Activated T-helper 1 cell treated with anti-CD3 and anti-CD28 coated beads, Interleukin-12 subunit alpha, Interleukin-12 subunit beta, Interleukin-2, Interleukin-4 antibody, amounts not matched to agents 30 ng/mL and 10 ng/mL and 1 ng/mL, durations not matched to agents 14 hours and 24 hours and 36 hours (primary cell): ENCODE measurements at regions of chr12 and their contacts with region 1.

Region 1: DNA sequence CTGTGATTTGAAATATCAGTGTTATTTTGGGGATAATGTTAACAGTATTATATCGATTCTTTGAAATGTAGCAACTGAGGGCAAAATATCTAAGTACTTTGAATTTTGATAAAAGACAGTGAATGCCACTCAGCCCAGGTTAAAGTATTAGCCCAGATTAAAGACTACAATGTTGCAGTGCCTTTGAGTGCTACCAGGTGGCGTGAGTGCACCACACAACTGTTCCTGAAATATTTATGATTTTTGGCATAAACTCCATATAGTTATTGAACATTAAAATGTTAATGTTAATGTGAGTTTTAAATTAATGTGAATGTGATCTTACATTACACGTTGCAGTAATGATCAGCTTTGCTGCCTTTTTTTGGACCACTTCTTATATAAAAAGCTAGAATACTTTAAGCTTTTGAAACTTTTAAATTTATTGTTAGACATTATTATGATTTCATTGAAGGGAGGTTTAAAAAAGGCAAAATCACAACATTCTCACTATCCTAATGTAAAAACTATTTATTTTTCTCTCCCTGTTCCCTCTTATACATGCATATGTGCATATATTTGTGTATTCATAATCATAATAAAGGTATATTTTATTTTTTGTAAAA is 22.5 kb downstream of the MRPS35 start:
- DNase-seq: no peak
- H3K4me3 Mint-ChIP-seq: no peak overlapping the region
- H3K27ac Mint-ChIP-seq: no peak overlapping the region
- H3K4me1 Mint-ChIP-seq: no peaks in the 10 kb centered on the region
- H3K27me3 Mint-ChIP-seq: no peaks in the 10 kb centered on the region

Region 2: GRCh38 chr12:27689558-27690180 is 43.5 kb before region 1 on chr12:
- intact Hi-C with region 1: no loop called
- DNase-seq: no peak
- H3K4me3 Mint-ChIP-seq: no peak overlapping the region
- H3K27ac Mint-ChIP-seq: no peak overlapping the region
- H3K4me1 Mint-ChIP-seq: no peaks in the 10 kb centered on the region
- H3K27me3 Mint-ChIP-seq: no peaks in the 10 kb centered on the region

Region 3: DNA sequence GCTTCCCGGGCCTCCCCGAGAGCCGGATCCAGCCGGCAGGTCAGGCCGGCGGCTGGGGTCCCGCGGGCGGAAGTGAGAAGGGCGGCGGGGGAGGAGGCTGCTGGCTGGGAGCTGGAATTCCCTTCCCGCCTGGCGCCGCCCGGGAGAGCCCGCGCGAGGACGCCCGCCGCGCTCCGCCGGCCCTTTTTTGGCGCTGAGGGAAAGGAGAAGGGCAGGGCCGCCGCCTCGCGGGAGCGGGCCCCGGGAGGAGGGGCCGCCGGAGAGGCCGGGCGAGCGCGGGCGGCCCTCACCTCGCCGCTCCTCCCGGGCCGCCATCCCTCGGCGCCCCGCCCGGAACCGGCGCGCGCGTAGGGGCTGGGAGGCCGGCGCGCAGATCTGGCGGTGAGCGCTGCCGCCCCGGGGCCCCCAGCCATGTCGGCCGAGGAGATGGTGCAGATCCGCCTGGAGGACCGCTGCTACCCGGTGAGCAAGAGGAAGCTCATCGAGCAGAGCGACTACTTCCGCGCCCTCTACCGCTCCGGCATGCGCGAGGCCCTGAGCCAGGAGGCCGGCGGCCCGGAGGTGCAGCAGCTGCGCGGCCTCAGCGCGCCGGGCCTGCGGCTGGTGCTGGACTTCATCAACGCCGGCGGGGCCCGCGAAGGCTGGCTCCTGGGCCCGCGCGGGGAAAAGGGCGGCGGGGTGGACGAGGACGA is 46.9 kb after region 1 on chr12 and contains the starts of genes KLHL42 and MANSC4:
- intact Hi-C with region 1: loop called (anchors 2 kb)
- DNase-seq: peak; percentile 62
- H3K4me3 Mint-ChIP-seq: peak within 1 kb of the TSS; percentile 84
- H3K27ac Mint-ChIP-seq: peak within 1 kb of the TSS; percentile 75
- H3K4me1 Mint-ChIP-seq: peaks cover 30% of the 10 kb centered on the region
- H3K27me3 Mint-ChIP-seq: peaks cover 19% of the 10 kb centered on the region
- total RNA-seq, gene KLHL42: 19.5 and 21.7 TPM in 2 replicates
- total RNA-seq, gene MANSC4: not detected in 2 replicates

Region 4: DNA sequence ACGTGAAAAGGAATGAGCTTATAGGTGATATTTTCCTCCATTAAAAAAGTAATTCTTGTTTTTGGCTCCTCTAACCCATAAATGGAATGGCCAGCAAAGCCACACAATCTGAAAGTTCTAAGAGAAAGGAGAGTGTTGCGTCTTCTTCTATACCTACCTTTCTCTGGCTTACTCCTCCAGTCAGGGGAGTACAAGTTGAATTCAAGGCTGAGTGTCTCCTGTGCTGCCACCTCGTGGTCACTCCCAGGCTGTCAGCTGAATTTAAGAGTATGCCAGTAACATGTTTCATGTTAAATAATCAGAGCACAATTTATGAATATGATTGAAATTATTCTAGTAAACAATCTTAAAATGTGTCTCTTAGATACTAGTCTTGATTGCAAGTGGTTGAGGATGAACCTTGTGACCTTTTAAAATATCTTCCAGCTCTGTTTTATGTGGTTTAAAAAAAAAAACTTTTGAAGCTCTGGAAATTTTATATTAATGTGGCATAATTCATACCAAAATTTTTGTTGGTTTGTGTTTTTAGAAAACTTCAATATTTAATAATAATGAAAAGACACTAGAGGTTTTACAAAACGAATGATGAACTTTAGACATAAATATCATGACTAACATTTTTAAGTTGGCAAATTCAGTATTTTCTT is 207.7 kb after region 1 on chr12:
- intact Hi-C with region 1: loop called (anchors 1 kb)
- DNase-seq: peak; percentile 48
- H3K4me3 Mint-ChIP-seq: no peak overlapping the region
- H3K27ac Mint-ChIP-seq: no peak overlapping the region
- H3K4me1 Mint-ChIP-seq: peaks cover 6% of the 10 kb centered on the region
- H3K27me3 Mint-ChIP-seq: peaks cover 18% of the 10 kb centered on the region

Region 5: GRCh38 chr12:28872654-28873268 is 1139.6 kb after region 1 on chr12:
- intact Hi-C with region 1: loop called (anchors 2 kb)
- DNase-seq: no peak
- H3K4me3 Mint-ChIP-seq: no peak overlapping the region
- H3K27ac Mint-ChIP-seq: no peak overlapping the region
- H3K4me1 Mint-ChIP-seq: no peaks in the 10 kb centered on the region
- H3K27me3 Mint-ChIP-seq: no peaks in the 10 kb centered on the region

Region 6: DNA sequence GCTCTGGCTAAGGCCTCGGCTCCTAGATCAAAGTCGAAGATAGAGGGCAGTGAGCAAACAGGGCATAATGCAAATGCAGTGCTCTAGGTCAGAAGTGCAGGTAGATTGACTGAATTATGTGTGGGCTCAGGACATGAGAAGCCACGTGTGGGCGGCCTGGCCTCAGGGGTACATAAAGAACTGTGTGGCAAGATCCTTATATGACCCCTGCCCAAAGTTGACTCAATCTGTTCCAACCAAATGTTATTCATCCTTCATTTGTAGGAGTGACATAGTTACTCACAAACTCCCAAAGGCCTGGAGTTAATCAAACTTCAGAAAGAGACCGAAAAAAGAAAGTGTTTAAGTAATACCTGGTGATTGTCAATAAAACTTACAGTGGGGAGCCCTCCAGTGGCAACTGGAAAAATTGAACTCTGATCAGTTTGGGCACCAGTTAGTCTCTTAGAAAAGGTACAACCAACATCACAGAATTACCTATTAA is 1265.5 kb after region 1 on chr12:
- intact Hi-C with region 1: loop called (anchors 2 kb)
- DNase-seq: no peak
- H3K4me3 Mint-ChIP-seq: no peak overlapping the region
- H3K27ac Mint-ChIP-seq: no peak overlapping the region
- H3K4me1 Mint-ChIP-seq: no peaks in the 10 kb centered on the region
- H3K27me3 Mint-ChIP-seq: no peaks in the 10 kb centered on the region